CD4-positive, alpha-beta T cell (primary cell): ENCODE measurements at regions of chr13 and their contacts with region 1.

Region 1: GRCh38 chr13:49996951-49997895 is at the start of gene TRIM13:
- DNase-seq: peak; percentile 72 to 91 (median 80)
- ATAC-seq: peak; percentile 83
- H3K4me3 ChIP-seq: peak within 1 kb of the TSS; percentile 96
- H3K4me3 Mint-ChIP-seq: peak within 1 kb of the TSS; percentile 97
- H3K27ac ChIP-seq: peak within 1 kb of the TSS; percentile 91
- H3K27ac Mint-ChIP-seq: peak within 1 kb of the TSS; percentile 90
- H3K4me1 ChIP-seq: peaks cover 32% of the 10 kb centered on the region
- H3K4me1 Mint-ChIP-seq: peaks cover 56% of the 10 kb centered on the region
- H3K27me3 ChIP-seq: no peaks in the 10 kb centered on the region
- H3K27me3 Mint-ChIP-seq: no peaks in the 10 kb centered on the region
- CTCF ChIP-seq: peak; percentile 95
- total RNA-seq, gene TRIM13: 32.5 to 32.9 TPM

Region 2: DNA sequence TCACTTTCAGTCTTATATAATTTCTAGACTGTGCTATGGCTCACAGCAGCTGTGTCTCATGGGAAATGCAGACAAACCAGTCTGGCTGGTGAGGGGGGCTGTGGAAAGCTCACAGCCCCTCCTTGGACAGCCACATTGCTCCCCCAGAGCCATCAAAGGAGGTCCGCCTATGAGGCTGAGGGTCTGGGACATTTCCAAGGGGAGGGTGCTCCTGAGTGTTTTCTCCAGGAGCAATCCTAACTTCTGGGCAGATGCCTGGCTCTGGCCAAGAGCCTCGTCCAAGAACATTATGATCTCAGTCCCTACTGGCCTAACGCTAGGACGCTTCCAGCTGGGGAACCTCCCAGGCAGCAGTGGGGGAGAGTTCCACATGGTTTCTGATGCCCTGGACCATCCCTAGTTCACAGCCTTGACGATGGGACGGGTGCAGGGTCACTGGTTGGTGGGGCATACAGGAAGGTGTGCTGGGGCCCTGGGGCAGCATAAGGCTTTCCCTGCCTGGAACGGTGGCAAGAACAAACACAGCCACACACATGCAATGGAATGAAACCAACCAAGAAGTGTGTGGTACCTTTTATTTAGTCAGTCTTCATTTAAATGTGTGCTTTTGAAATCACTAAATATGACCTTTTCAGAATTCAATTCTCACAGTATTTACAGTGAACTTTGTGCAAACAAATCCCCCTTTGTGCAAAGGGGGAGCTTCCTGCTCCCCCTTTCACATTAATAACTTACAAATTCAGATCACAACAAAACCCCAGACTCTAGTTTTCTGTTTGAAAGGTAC is 688.9 kb before region 1 on chr13:
- CTCF ChIA-PET with region 1: no interaction called
- POLR2A ChIA-PET with region 1: no interaction called
- intact Hi-C with region 1: no loop called
- DNase-seq: no peak
- ATAC-seq: no peak
- H3K4me3 ChIP-seq: no peak overlapping the region
- H3K4me3 Mint-ChIP-seq: no peak overlapping the region
- H3K27ac ChIP-seq: no peak overlapping the region
- H3K27ac Mint-ChIP-seq: no peak overlapping the region
- H3K4me1 ChIP-seq: no peaks in the 10 kb centered on the region
- H3K4me1 Mint-ChIP-seq: no peaks in the 10 kb centered on the region
- H3K27me3 ChIP-seq: no peaks in the 10 kb centered on the region
- H3K27me3 Mint-ChIP-seq: no peaks in the 10 kb centered on the region
- CTCF ChIP-seq: no peak

Region 3: GRCh38 chr13:49936085-49936940 is 60.9 kb before region 1 on chr13 and contains the start of gene SPRYD7:
- CTCF ChIA-PET with region 1: interaction called, 15 read pairs
- POLR2A ChIA-PET with region 1: interaction called, 31 read pairs
- intact Hi-C with region 1: loop called in 1 of 2 experiments (anchors 1 kb)
- DNase-seq: peak; percentile 86 to 97 (median 92)
- ATAC-seq: peak; percentile 82
- H3K4me3 ChIP-seq: peak within 1 kb of the TSS; percentile 91
- H3K4me3 Mint-ChIP-seq: peak within 1 kb of the TSS; percentile 98
- H3K27ac ChIP-seq: no peak within 1 kb of the TSS
- H3K27ac Mint-ChIP-seq: peak within 1 kb of the TSS; percentile 83
- H3K4me1 ChIP-seq: peaks cover 18% of the 10 kb centered on the region
- H3K4me1 Mint-ChIP-seq: peaks cover 19% of the 10 kb centered on the region
- H3K27me3 ChIP-seq: no peaks in the 10 kb centered on the region
- H3K27me3 Mint-ChIP-seq: no peaks in the 10 kb centered on the region
- CTCF ChIP-seq: peak; percentile 74
- total RNA-seq, gene SPRYD7: 1.1 to 1.5 TPM

Region 4: DNA sequence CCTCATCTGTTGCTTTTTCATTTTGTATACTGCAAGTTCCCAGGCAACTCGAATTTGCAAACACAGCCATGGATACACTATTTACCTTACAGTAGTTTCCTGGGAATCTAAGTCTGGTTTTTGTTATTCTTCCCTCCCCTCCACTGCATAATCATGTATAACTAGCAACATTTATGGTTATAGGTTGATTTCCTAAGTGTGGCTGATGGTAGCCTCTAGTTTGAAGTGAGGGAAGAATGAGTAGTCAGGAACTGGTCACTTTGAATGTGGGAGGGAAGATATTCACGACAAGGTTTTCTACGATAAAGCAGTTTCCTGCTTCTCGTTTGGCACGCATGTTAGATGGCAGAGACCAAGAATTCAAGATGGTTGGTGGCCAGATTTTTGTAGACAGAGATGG is 18.0 kb after region 1 on chr13 and contains the start of gene KCNRG:
- CTCF ChIA-PET with region 1: interaction called, 11 read pairs
- POLR2A ChIA-PET with region 1: interaction called, 14 read pairs
- intact Hi-C with region 1: no loop called
- DNase-seq: no peak
- ATAC-seq: no peak
- H3K4me3 ChIP-seq: no peak within 1 kb of the TSS
- H3K4me3 Mint-ChIP-seq: no peak within 1 kb of the TSS
- H3K27ac ChIP-seq: no peak within 1 kb of the TSS
- H3K27ac Mint-ChIP-seq: peak within 1 kb of the TSS; percentile 64
- H3K4me1 ChIP-seq: peaks cover 2% of the 10 kb centered on the region
- H3K4me1 Mint-ChIP-seq: peaks cover 55% of the 10 kb centered on the region
- H3K27me3 ChIP-seq: no peaks in the 10 kb centered on the region
- H3K27me3 Mint-ChIP-seq: no peaks in the 10 kb centered on the region
- CTCF ChIP-seq: no peak
- total RNA-seq, gene KCNRG: 0.27 to 0.70 TPM

Region 5: GRCh38 chr13:50075619-50076097 is 78.4 kb after region 1 on chr13:
- CTCF ChIA-PET with region 1: interaction called, 57 read pairs
- POLR2A ChIA-PET with region 1: interaction called, 209 read pairs
- intact Hi-C with region 1: loop called in 1 of 2 experiments (anchors 2 kb)
- DNase-seq: peak in 1 of 14 experiments; percentile 20
- ATAC-seq: no peak
- H3K4me3 ChIP-seq: no peak overlapping the region
- H3K4me3 Mint-ChIP-seq: peak overlapping the region; percentile 60
- H3K27ac ChIP-seq: no peak overlapping the region
- H3K27ac Mint-ChIP-seq: peak overlapping the region; percentile 32
- H3K4me1 ChIP-seq: peaks cover 7% of the 10 kb centered on the region
- H3K4me1 Mint-ChIP-seq: peaks cover 33% of the 10 kb centered on the region
- H3K27me3 ChIP-seq: no peaks in the 10 kb centered on the region
- H3K27me3 Mint-ChIP-seq: peaks cover 33% of the 10 kb centered on the region
- CTCF ChIP-seq: no peak

Region 6: GRCh38 chr13:50236898-50237318 is 239.7 kb after region 1 on chr13:
- CTCF ChIA-PET with region 1: interaction called, 4 read pairs
- POLR2A ChIA-PET with region 1: interaction called, 4 read pairs
- intact Hi-C with region 1: loop called in 1 of 2 experiments (anchors 5 kb)
- DNase-seq: peak in 6 of 14 experiments; percentile 5 to 79 (median 56)
- ATAC-seq: peak; percentile 91
- H3K4me3 ChIP-seq: peak overlapping the region; percentile 47
- H3K4me3 Mint-ChIP-seq: peak overlapping the region; percentile 78
- H3K27ac ChIP-seq: peak overlapping the region in 1 of 2 donors; percentile 56
- H3K27ac Mint-ChIP-seq: peak overlapping the region; percentile 67
- H3K4me1 ChIP-seq: peaks cover 11% of the 10 kb centered on the region
- H3K4me1 Mint-ChIP-seq: peaks cover 32% of the 10 kb centered on the region
- H3K27me3 ChIP-seq: no peaks in the 10 kb centered on the region
- H3K27me3 Mint-ChIP-seq: no peaks in the 10 kb centered on the region
- CTCF ChIP-seq: no peak